WTC11 (cell line): ENCODE measurements at regions of chr19 and their contacts with region 1.

Region 1: DNA sequence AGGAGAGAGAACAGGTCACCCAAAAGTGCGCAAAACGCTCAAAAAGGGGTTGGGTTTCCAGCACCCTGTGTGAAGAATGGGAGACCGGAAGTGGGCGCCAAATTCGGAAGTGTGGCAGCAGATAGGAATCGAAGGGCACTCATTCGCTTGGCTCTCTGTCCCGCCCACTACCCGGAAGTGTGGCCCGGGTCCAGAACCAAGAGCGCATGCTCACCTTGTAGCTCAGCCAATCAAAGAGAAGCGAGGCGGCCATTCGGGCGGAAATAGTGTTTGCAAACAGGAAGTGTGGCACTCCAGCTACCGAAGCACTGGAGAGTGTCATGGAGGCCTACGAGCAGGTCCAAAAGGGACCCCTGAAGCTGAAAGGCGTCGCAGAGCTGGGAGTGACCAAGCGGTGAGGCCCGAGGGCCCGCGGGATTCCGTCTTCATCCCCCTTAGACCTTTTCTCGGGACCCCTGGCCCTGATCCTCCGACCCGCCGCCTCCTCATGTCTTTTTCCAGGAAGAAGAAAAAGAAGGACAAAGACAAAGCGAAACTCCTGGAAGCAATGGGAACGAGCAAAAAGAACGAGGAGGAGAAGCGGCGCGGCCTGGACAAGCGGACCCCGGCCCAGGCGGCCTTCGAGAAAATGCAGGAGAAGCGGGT is at the start of gene FAM32A:
- DNase-seq: peak; percentile 97
- ATAC-seq: peak; percentile 93
- H3K4me3 Mint-ChIP-seq: peak within 1 kb of the TSS; percentile 94
- H3K27ac Mint-ChIP-seq: peak within 1 kb of the TSS; percentile 89
- H3K4me1 Mint-ChIP-seq: peaks cover 6% of the 10 kb centered on the region
- H3K27me3 Mint-ChIP-seq: no peaks in the 10 kb centered on the region; the same call in 1 of the 2 replicates
- CTCF ChIP-seq: no peak
- total RNA-seq, gene FAM32A: 59.5 to 62.6 TPM (median 62.2 TPM) in 3 replicates

Region 2: GRCh38 chr19:16025108-16026101 is 159.8 kb before region 1 on chr19:
- CTCF ChIA-PET with region 1: interaction called, 12 read pairs
- POLR2A ChIA-PET with region 1: no interaction called
- DNase-seq: peak; percentile 67
- ATAC-seq: peak; percentile 96
- H3K4me3 Mint-ChIP-seq: no peak overlapping the region
- H3K27ac Mint-ChIP-seq: no peak overlapping the region
- H3K4me1 Mint-ChIP-seq: no peaks in the 10 kb centered on the region
- H3K27me3 Mint-ChIP-seq: no peaks in the 10 kb centered on the region
- CTCF ChIP-seq: 0 out of 2 replicates have a peak, but pooled peaks have one; percentile 19

Region 3: DNA sequence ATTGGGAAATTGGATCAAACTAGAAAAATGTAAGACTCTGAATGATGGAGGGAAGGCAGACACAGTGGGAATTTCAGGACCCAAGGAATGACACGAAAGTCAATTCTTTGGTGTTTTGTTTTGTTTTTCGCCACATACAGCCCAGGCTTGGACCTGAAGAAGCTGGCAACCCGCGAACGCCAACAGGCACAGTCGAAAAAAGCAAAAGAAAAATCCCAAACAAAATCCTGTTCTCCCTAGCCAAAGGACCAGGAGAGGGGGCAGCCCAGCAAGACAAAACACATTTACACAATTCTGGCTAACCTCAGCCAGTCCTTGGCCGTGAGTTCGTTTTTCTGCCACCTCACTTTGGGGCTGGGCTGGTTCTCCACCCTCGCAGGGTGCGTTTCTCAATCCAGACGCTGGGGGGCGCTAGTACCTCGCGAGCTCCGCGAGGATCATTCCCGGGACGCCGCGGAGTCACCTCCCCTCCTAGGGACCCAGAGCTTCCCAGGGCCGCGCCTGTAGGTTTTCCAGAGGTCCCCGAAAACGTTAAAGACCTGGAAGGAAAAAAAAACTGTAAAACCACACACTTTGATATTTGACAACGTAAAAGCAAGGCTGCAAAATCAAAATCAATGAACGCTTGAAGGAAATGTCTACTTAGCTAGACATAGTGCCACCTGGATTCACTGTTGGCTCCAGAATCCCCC is 143.8 kb before region 1 on chr19:
- CTCF ChIA-PET with region 1: interaction called, 29 read pairs
- POLR2A ChIA-PET with region 1: no interaction called
- DNase-seq: peak; percentile 93
- ATAC-seq: peak; percentile 96
- H3K4me3 Mint-ChIP-seq: peak overlapping the region; percentile 38
- H3K27ac Mint-ChIP-seq: no peak overlapping the region
- H3K4me1 Mint-ChIP-seq: 0 out of 2 replicates have a peak, but pooled peaks cover 3% of the 10 kb centered on the region
- H3K27me3 Mint-ChIP-seq: peaks cover 8% of the 10 kb centered on the region
- CTCF ChIP-seq: peak; percentile 97

Region 4: DNA sequence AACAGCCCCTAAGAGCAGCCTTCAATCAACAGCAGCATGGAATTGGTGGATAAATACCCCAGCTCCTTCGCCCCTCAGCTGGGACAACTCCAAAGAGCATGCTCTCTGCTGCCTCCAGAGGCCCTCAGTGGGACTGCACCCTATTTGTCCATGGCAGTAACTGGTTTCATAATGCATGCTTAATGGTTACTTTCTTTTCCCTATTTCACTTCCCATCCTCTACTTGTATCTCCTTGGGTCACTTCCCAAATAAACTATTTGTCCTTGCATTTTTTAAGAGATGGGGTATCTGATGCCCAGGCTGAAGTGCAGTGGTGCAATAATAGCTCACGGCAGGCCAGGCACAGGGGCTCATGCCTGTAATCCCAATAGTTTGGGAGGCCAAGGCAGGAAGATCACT is 122.5 kb before region 1 on chr19:
- CTCF ChIA-PET with region 1: interaction called, 16 read pairs
- POLR2A ChIA-PET with region 1: no interaction called
- DNase-seq: peak; percentile 84
- ATAC-seq: peak; percentile 76
- H3K4me3 Mint-ChIP-seq: no peak overlapping the region
- H3K27ac Mint-ChIP-seq: no peak overlapping the region
- H3K4me1 Mint-ChIP-seq: peaks cover 16% of the 10 kb centered on the region
- H3K27me3 Mint-ChIP-seq: peaks cover 4% of the 10 kb centered on the region
- CTCF ChIP-seq: peak; percentile 95

Region 5: GRCh38 chr19:16111160-16111908 is 73.9 kb before region 1 on chr19 and contains the start of gene RAB8A:
- CTCF ChIA-PET with region 1: interaction called, 21 read pairs
- POLR2A ChIA-PET with region 1: no interaction called
- DNase-seq: peak; percentile 97
- ATAC-seq: peak; percentile 95
- H3K4me3 Mint-ChIP-seq: peak within 1 kb of the TSS; percentile 96
- H3K27ac Mint-ChIP-seq: peak within 1 kb of the TSS; percentile 96
- H3K4me1 Mint-ChIP-seq: peaks cover 13% of the 10 kb centered on the region
- H3K27me3 Mint-ChIP-seq: peaks cover 2% of the 10 kb centered on the region; the same call in 1 of the 2 replicates
- CTCF ChIP-seq: peak; percentile 86
- total RNA-seq, gene RAB8A: 68.4 to 81.8 TPM (median 74.0 TPM) in 3 replicates

Region 6: DNA sequence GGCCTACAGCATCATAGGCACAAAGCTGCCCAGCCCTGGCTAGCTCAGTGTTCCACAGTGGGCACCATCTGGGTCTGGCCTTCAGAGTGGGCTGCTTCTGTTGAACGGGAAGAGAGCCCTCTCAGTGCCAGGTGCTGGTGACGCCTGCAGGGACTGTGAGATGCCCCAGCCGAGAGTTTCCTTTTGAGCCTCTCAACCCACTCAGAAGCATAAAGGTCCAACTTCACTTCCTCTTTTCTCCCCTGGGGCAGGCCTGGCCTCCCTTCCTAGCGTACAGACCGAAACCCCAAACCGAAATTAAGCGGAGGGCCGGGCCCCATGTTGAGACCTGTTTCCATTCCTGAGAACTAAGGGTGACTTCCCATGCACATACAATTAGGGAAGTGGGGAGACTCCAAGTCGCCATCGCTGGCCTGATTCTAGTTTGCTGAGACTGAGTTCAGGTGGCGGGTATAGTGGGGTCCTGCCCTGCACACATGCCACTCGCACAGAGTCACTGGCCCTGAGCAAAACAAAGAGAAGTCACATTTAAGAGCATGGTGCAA is 66.7 kb before region 1 on chr19:
- CTCF ChIA-PET with region 1: interaction called, 10 read pairs
- POLR2A ChIA-PET with region 1: no interaction called
- DNase-seq: no peak
- ATAC-seq: no peak
- H3K4me3 Mint-ChIP-seq: no peak overlapping the region
- H3K27ac Mint-ChIP-seq: no peak overlapping the region
- H3K4me1 Mint-ChIP-seq: no peaks in the 10 kb centered on the region
- H3K27me3 Mint-ChIP-seq: no peaks in the 10 kb centered on the region
- CTCF ChIP-seq: no peak

Region 7: GRCh38 chr19:16197622-16198369 is 12.6 kb after region 1 on chr19 and contains the start of gene AP1M1:
- CTCF ChIA-PET with region 1: interaction called, 39 read pairs
- POLR2A ChIA-PET with region 1: interaction called, 6 read pairs
- DNase-seq: peak; percentile 97
- ATAC-seq: peak; percentile 85
- H3K4me3 Mint-ChIP-seq: peak within 1 kb of the TSS; percentile 89
- H3K27ac Mint-ChIP-seq: peak within 1 kb of the TSS; percentile 97
- H3K4me1 Mint-ChIP-seq: peaks cover 17% of the 10 kb centered on the region
- H3K27me3 Mint-ChIP-seq: no peaks in the 10 kb centered on the region
- CTCF ChIP-seq: no peak
- total RNA-seq, gene AP1M1: 27.7 to 34.5 TPM (median 30.5 TPM) in 3 replicates

Region 8: GRCh38 chr19:16266586-16266942 is 81.3 kb after region 1 on chr19:
- CTCF ChIA-PET with region 1: no interaction called
- POLR2A ChIA-PET with region 1: no interaction called
- DNase-seq: no peak
- ATAC-seq: no peak
- H3K4me3 Mint-ChIP-seq: no peak overlapping the region
- H3K27ac Mint-ChIP-seq: no peak overlapping the region
- H3K4me1 Mint-ChIP-seq: no peaks in the 10 kb centered on the region
- H3K27me3 Mint-ChIP-seq: no peaks in the 10 kb centered on the region
- CTCF ChIP-seq: no peak